ENCODE measurements at regions of chr14 and their contacts with region 1.

Region 1: GRCh38 chr14:75560962-75561432 is 17.4 kb upstream of the FLVCR2 start:
- DNase-seq: peak in 13 of 35 experiments; percentile 6 to 73 (median 30)
- ATAC-seq: peak; percentile 49 to 76 (median 58)
- H3K4me3 ChIP-seq: no peak overlapping the region
- H3K4me3 Mint-ChIP-seq: peak overlapping the region in 1 of 3 donors; percentile 23
- H3K27ac ChIP-seq: no peak overlapping the region
- H3K27ac Mint-ChIP-seq: peak overlapping the region; percentile 58 to 68
- H3K4me1 ChIP-seq: peaks cover 2 to 20% of the 10 kb centered on the region in 2 experiments
- H3K4me1 Mint-ChIP-seq: peaks cover 35 to 50% (median 47%) of the 10 kb centered on the region in 3 donors
- H3K27me3 ChIP-seq: peaks cover 0 to 2% of the 10 kb centered on the region in 2 experiments
- H3K27me3 Mint-ChIP-seq: no peaks in the 10 kb centered on the region

Region 2: DNA sequence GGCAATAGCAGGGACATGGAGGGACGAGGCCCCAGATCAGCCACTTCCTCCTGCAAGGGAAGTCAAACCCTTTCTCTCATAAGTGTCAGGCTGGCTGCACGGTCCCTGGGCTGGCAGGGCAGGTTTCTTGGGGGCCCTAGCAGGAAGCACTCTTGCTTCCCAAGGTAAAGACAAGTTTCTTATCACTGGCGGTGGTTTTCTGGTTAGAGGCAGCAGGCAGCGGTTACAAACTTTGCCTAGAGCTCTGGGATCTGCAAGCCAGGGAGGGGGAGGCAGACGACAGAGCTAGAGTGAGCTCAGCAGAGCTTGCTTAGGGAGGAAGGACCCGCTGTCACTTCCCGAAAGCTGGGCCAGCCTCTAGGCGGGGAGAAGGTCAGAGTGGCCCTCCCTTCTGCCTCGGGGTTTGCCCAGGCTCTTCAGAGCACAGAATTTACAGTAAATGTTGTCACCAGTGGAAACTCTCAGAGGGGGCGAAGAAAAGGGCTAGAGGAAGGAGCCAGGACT is 18.4 kb before region 1 on chr14:
- CTCF ChIA-PET with region 1: interaction called in 1 of 2 experiments, 11 read pairs
- POLR2A ChIA-PET with region 1: no interaction called
- DNase-seq: peak in 34 of 35 experiments; percentile 46 to 87 (median 74)
- ATAC-seq: peak; percentile 73 to 88 (median 77)
- H3K4me3 ChIP-seq: peak overlapping the region; percentile 36 to 39
- H3K4me3 Mint-ChIP-seq: peak overlapping the region; percentile 70 to 75 (median 71)
- H3K27ac ChIP-seq: peak overlapping the region; percentile 97
- H3K27ac Mint-ChIP-seq: peak overlapping the region; percentile 96 to 99
- H3K4me1 ChIP-seq: peaks cover 14 to 84% of the 10 kb centered on the region in 2 experiments
- H3K4me1 Mint-ChIP-seq: peaks cover 48 to 72% (median 65%) of the 10 kb centered on the region in 3 donors
- H3K27me3 ChIP-seq: no peaks in the 10 kb centered on the region
- H3K27me3 Mint-ChIP-seq: no peaks in the 10 kb centered on the region

Region 3: DNA sequence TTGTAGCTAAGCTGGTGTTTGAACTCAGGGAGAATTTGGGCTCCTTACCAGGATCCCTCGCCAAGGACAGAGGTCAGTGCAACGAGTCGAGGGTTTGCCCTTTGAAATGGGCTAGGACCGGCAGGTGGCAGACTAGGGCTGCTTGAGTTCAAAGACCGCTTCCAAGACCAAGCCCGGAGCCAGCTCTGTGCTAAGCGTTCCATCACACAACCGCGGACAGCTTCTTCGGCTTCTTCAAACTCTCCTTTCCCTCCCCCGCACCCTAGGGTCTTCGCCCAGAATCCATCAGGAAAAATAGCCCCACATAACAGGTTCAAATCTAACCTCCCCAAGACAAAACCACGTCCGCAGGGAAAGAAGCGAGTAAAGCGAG is 16.7 kb after region 1 on chr14:
- CTCF ChIA-PET with region 1: interaction called, 4 to 10 read pairs
- POLR2A ChIA-PET with region 1: no interaction called
- DNase-seq: peak; percentile 15 to 78 (median 58)
- ATAC-seq: peak; percentile 84 to 91 (median 86)
- H3K4me3 ChIP-seq: peak overlapping the region; percentile 74 to 86
- H3K4me3 Mint-ChIP-seq: no peak overlapping the region
- H3K27ac ChIP-seq: peak overlapping the region; percentile 36
- H3K27ac Mint-ChIP-seq: peak overlapping the region; percentile 77 to 86
- H3K4me1 ChIP-seq: peaks cover 7 to 26% of the 10 kb centered on the region in 2 experiments
- H3K4me1 Mint-ChIP-seq: peaks cover 4 to 11% (median 7%) of the 10 kb centered on the region in 3 donors
- H3K27me3 ChIP-seq: peaks cover 0 to 2% of the 10 kb centered on the region in 2 experiments
- H3K27me3 Mint-ChIP-seq: no peaks in the 10 kb centered on the region

Region 4: GRCh38 chr14:75604856-75605851 is 44.2 kb after region 1 on chr14:
- CTCF ChIA-PET with region 1: no interaction called
- POLR2A ChIA-PET with region 1: no interaction called
- DNase-seq: peak in 1 of 35 experiments; percentile 11
- ATAC-seq: no peak
- H3K4me3 ChIP-seq: no peak overlapping the region
- H3K4me3 Mint-ChIP-seq: no peak overlapping the region
- H3K27ac ChIP-seq: no peak overlapping the region
- H3K27ac Mint-ChIP-seq: no peak overlapping the region
- H3K4me1 ChIP-seq: no peaks in the 10 kb centered on the region
- H3K4me1 Mint-ChIP-seq: no peaks in the 10 kb centered on the region
- H3K27me3 ChIP-seq: no peaks in the 10 kb centered on the region
- H3K27me3 Mint-ChIP-seq: no peaks in the 10 kb centered on the region

Measured in T-cell (primary cell).